MCF 10A (cell line): ENCODE measurements at regions of chr9 and their contacts with region 1.

Region 1: GRCh38 chr9:72022841-72023240 is 37.6 kb downstream of the C9orf57 start:
- DNase-seq: peak; percentile 41
- H3K4me3 Mint-ChIP-seq: no peak overlapping the region
- H3K27ac Mint-ChIP-seq: no peak overlapping the region
- H3K4me1 Mint-ChIP-seq: peaks cover 16% of the 10 kb centered on the region
- H3K27me3 Mint-ChIP-seq: no peaks in the 10 kb centered on the region
- CTCF ChIP-seq: no peak

Region 2: DNA sequence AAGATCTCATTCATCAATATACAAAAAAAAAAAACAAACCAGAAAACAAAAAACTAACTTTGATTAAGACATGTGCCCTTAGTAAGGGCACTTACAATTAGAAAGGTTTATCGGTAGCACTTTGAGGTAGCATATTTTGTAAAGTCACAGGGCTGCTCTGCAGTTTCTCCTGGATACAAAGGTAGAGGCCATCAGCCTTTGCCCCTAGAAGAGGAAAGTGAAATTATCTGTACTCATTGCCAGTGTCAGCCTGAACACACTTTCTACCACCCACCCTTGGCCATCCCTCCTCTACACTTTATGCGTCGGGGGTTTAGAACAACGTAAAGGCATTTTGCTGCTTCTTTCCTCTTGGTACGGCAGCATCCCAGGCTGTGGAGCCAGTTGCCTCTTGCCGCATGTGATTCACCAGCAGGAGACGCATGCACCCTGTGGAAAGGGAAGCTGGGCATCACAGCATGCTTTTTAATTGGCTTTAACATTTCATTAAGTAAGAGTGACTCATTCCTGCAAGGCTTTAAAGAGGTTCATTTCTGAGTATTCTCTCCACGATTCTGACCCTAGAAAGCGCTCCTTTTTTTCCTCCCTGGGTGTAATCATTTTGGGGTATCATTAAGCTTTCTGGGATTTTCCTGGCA is 339.1 kb before region 1 on chr9:
- CTCF ChIA-PET with region 1: interaction called, 9 read pairs
- POLR2A ChIA-PET with region 1: no interaction called
- intact Hi-C with region 1: loop called (anchors 10 kb)
- DNase-seq: peak; percentile 88
- H3K4me3 Mint-ChIP-seq: peak overlapping the region; percentile 15
- H3K27ac Mint-ChIP-seq: no peak overlapping the region
- H3K4me1 Mint-ChIP-seq: peaks cover 35% of the 10 kb centered on the region
- H3K27me3 Mint-ChIP-seq: no peaks in the 10 kb centered on the region
- CTCF ChIP-seq: peak; percentile 62

Region 3: DNA sequence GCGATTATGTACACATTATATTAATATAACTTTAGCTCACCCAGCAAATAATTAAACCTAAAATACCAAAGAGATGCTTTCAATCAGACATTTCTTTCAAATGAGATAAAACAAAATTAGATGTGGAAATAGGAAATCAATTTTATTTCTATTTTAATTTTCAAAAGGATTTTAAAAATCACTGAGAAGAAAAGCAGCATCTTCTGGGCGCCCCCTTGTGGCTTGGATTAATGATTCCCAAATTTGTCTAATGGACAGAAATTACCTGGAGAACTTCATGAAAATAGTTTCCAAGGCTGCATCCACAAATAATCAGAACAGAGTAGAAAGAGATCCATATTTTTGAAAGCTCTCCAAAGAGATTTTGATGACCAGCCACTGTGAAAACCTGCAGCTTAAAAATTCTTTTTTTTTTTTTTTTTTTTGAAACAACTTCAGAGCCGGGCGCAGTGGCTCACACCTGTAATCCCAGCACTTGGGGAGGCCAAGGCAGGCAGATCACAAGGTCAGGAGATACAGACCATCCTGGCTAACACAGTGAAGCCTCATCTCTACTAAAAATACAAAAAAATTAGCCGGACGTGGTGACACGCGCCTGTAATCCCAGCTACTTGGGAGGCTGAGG is 203.6 kb before region 1 on chr9:
- CTCF ChIA-PET with region 1: interaction called, 30 read pairs
- POLR2A ChIA-PET with region 1: no interaction called
- intact Hi-C with region 1: no loop called
- DNase-seq: peak; percentile 56
- H3K4me3 Mint-ChIP-seq: no peak overlapping the region
- H3K27ac Mint-ChIP-seq: no peak overlapping the region
- H3K4me1 Mint-ChIP-seq: no peaks in the 10 kb centered on the region
- H3K27me3 Mint-ChIP-seq: no peaks in the 10 kb centered on the region
- CTCF ChIP-seq: peak; percentile 62

Region 4: DNA sequence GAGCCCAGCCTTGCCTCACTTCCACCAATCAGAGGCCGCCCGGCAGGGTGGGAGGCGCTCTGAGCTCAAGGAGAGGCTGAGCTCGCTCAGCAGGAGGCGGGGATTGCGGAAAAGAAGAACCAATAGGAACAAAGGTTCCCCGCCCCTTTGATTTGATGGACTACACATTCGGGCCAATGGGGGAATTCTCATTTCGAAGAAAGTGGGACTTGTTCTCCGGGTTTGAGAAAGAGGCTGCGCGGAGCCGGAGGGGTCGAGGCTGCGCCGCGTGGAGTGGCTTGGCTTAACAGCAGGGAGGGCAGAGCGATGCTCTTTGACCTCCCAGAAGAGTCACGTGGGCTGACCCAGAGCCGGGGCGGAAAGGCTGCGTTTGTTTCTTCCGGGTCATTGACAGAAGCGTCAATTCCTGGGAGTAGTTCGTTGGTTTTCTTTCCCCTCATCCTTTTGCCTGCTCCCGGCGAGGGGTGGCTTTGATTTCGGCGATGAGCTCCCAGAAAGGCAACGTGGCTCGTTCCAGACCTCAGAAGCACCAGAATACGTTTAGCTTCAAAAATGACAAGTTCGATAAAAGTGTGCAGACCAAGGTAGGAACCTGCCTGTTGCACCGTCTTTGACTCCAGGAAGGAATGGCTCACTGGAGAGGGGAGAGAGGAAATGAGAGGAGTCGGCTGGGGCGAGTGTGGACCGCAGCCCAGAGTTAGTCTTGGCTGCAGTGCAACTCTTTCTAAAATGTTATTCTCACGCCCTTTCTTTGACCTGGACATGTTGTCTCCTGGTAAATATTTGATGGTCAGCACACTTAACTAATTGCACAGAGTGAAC is 111.4 kb before region 1 on chr9 and contains the start of gene C9orf85:
- CTCF ChIA-PET with region 1: interaction called, 8 read pairs
- POLR2A ChIA-PET with region 1: interaction called, 15 read pairs
- intact Hi-C with region 1: loop called (anchors 2 kb)
- DNase-seq: peak; percentile 100
- H3K4me3 Mint-ChIP-seq: peak within 1 kb of the TSS; percentile 95
- H3K27ac Mint-ChIP-seq: peak within 1 kb of the TSS; percentile 88
- H3K4me1 Mint-ChIP-seq: peaks cover 23% of the 10 kb centered on the region
- H3K27me3 Mint-ChIP-seq: no peaks in the 10 kb centered on the region
- CTCF ChIP-seq: no peak
- total RNA-seq, gene C9orf85: 19.6 and 23.3 TPM in 2 replicates

Region 5: GRCh38 chr9:71984403-71984802 is 38.4 kb before region 1 on chr9:
- CTCF ChIA-PET with region 1: interaction called, 10 read pairs
- POLR2A ChIA-PET with region 1: no interaction called
- intact Hi-C with region 1: no loop called
- DNase-seq: peak; percentile 50
- H3K4me3 Mint-ChIP-seq: peak overlapping the region; percentile 17
- H3K27ac Mint-ChIP-seq: peak overlapping the region; percentile 33
- H3K4me1 Mint-ChIP-seq: peaks cover 17% of the 10 kb centered on the region
- H3K27me3 Mint-ChIP-seq: no peaks in the 10 kb centered on the region
- CTCF ChIP-seq: no peak

Region 6: GRCh38 chr9:72006501-72006900 is 16.3 kb before region 1 on chr9:
- CTCF ChIA-PET with region 1: interaction called, 50 read pairs
- POLR2A ChIA-PET with region 1: no interaction called
- intact Hi-C with region 1: no loop called
- DNase-seq: no peak
- H3K4me3 Mint-ChIP-seq: no peak overlapping the region
- H3K27ac Mint-ChIP-seq: no peak overlapping the region
- H3K4me1 Mint-ChIP-seq: peaks cover 8% of the 10 kb centered on the region
- H3K27me3 Mint-ChIP-seq: no peaks in the 10 kb centered on the region
- CTCF ChIP-seq: no peak

Region 7: GRCh38 chr9:72271613-72272478 is 249.0 kb after region 1 on chr9:
- CTCF ChIA-PET with region 1: interaction called, 21 read pairs
- POLR2A ChIA-PET with region 1: no interaction called
- intact Hi-C with region 1: no loop called
- DNase-seq: peak; percentile 77
- H3K4me3 Mint-ChIP-seq: no peak overlapping the region
- H3K27ac Mint-ChIP-seq: no peak overlapping the region
- H3K4me1 Mint-ChIP-seq: peaks cover 6% of the 10 kb centered on the region
- H3K27me3 Mint-ChIP-seq: no peaks in the 10 kb centered on the region
- CTCF ChIP-seq: peak; percentile 74